ENCODE measurements at regions of chr4 and their contacts with region 1.

Region 1: GRCh38 chr4:6562931-6563901 is 11.8 kb upstream of the MAN2B2 start:
- DNase-seq: no peak
- ATAC-seq: peak; percentile 34 to 58 (median 36)
- H3K4me3 ChIP-seq: peak overlapping the region; percentile 63
- H3K27ac ChIP-seq: no peak overlapping the region
- H3K4me1 ChIP-seq: peaks cover 4% of the 10 kb centered on the region
- H3K27me3 ChIP-seq: peaks cover 0 to 77% (median 23%) of the 10 kb centered on the region in 3 donors
- CTCF ChIP-seq: no peak

Region 2: DNA sequence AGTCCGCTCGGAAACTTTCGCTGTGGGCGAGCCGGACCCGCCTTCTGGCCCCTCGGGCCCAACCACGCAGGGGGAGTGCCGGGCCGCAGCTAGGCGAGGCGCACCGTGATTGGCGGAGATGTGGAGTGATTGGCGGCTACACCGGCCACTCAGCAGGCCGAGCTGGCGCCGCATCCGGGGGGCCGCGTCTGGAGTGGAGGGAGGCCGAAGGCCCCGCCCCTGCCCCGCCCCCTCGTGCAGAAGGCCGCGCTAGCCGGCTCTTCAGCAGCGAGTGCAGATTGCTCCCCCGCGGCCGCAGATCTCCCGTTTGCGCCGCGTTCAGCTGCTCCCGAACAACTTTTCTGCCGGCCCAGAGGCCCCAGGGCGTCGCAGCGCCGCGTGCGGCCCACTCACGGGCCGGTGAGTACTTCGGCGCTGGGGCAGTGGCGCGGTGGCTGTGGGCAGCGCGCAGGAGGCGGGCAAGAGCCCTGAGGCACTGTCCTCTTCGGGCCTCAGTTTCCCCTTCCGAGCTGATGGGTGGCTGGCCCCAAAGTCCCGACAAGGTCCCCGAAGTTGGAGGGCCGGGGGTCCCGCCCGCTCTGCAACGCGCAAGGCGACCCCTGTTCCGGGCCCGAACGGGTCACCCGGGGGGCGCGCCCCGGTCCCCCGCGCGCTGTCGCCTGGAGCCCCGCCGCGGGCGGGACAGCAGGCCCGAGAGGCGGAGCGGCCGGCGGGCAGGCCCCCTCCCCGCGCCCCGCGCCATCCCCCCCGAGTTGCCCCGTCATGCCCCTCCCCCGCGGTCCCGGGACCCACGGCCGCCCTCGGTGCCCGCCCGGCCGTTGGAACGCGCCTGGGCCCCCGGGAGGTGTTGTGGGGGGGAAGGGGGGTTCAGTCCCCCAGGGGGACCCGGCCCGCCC is 293.4 kb before region 1 on chr4 and contains the start of gene WFS1:
- intact Hi-C with region 1: loop called in 1 of 2 experiments (anchors 10 kb)
- DNase-seq: peak; percentile 99 to 100
- ATAC-seq: peak; percentile 100
- H3K4me3 ChIP-seq: peak within 1 kb of the TSS; percentile 95
- H3K27ac ChIP-seq: peak within 1 kb of the TSS; percentile 77
- H3K4me1 ChIP-seq: peaks cover 20% of the 10 kb centered on the region
- H3K27me3 ChIP-seq: no peaks in the 10 kb centered on the region
- CTCF ChIP-seq: no peak
- total RNA-seq, gene WFS1: 8.0 to 13.3 (median 10.0) TPM

Region 3: DNA sequence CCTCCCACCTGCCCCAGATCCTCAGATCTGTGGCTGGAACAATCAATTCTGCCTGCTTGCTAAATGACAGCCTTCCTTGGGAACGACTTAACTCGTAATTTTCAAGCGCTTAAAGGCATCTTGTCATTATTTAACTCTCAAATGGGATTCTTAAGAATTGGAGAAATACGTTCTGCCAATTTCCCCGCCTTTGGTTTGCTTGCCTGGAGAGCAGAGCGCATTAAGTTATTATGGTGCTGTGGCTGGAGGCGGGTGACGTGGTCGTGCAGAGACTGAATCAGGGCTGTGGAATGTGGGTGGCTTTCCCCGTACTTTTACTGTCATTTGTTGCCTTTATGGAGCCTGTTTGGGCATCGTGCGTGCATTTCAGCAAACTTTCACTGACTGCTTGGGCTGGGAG is 950.5 kb after region 1 on chr4:
- intact Hi-C with region 1: no loop called
- DNase-seq: no peak
- ATAC-seq: no peak
- H3K4me3 ChIP-seq: no peak overlapping the region
- H3K27ac ChIP-seq: no peak overlapping the region
- H3K4me1 ChIP-seq: no peaks in the 10 kb centered on the region
- H3K27me3 ChIP-seq: peaks cover 0 to 50% (median 10%) of the 10 kb centered on the region in 3 donors
- CTCF ChIP-seq: no peak

Measured in psoas muscle (tissue), 8 donors.